Ascending aorta (tissue), 2 donors: ENCODE measurements at regions of chr11 and their contacts with region 1.

Region 1: GRCh38 chr11:130448416-130449309 is at the start of gene ADAMTS15:
- DNase-seq: peak; percentile 39 to 88
- H3K4me3 ChIP-seq: peak within 1 kb of the TSS; percentile 57 to 81
- H3K27ac ChIP-seq: peak within 1 kb of the TSS; percentile 76 to 82
- H3K4me1 ChIP-seq: peaks cover 11 to 24% of the 10 kb centered on the region in 2 donors
- H3K27me3 ChIP-seq: no peaks in the 10 kb centered on the region
- CTCF ChIP-seq: no peak
- total RNA-seq, gene ADAMTS15: 20.4 TPM

Region 2: DNA sequence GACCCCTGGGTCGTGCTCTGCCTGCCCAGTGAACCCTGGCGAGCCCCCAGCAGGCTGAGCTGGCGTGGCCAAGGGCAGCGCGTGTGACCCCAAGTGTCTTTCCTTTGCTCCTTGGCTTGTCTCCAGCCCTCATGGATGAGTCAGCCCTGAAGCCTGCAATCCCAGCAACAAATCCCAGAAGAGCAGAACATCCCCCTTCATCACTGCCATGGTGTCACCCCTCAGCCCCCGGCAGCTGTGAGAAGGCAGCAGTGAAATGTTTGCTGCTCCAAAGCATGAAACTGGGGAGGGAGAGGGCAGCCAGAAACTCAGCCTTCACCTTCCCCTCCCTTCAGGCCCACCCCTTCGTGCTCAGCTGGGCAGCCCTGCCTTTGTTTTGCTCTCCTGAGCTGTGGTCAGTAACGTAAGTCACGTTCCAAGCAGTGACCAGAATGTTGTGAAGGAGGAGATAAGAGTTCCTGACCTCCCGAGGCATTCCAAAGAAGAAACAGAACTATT is 29.6 kb after region 1 on chr11:
- intact Hi-C with region 1: loop called (anchors 1 kb)
- DNase-seq: peak in 1 of 2 donors; percentile 89
- H3K4me3 ChIP-seq: no peak overlapping the region
- H3K27ac ChIP-seq: peak overlapping the region; percentile 75 to 86
- H3K4me1 ChIP-seq: peaks cover 11 to 31% of the 10 kb centered on the region in 2 donors
- H3K27me3 ChIP-seq: no peaks in the 10 kb centered on the region
- CTCF ChIP-seq: no peak

Region 3: GRCh38 chr11:130522284-130522961 is 73.8 kb after region 1 on chr11:
- intact Hi-C with region 1: loop called (anchors 2 kb)
- DNase-seq: peak; percentile 81 to 97
- H3K4me3 ChIP-seq: no peak overlapping the region
- H3K27ac ChIP-seq: peak overlapping the region; percentile 76 to 85
- H3K4me1 ChIP-seq: peaks cover 0 to 23% of the 10 kb centered on the region in 2 donors
- H3K27me3 ChIP-seq: no peaks in the 10 kb centered on the region
- CTCF ChIP-seq: no peak

Region 4: DNA sequence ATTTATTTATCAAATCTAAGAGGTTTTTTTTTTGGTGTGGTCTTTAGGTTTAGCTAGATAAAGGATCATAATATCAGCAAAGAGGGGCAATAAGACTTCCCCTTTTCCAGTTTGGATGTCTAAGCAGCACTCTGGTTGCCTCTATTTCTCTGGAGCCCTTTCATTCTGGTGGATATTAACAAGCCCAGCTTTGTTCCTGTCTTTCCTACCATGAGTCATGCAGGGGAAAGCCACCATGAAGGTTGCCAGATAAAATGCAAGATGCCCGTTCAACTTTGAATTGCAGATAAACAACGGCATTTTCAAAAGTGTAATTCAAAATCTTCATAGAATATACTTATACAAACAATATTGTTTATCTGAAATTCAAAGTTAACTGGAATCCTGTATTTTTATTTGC is 143.4 kb after region 1 on chr11:
- intact Hi-C with region 1: no loop called
- DNase-seq: no peak
- H3K4me3 ChIP-seq: no peak overlapping the region
- H3K27ac ChIP-seq: no peak overlapping the region
- H3K4me1 ChIP-seq: no peaks in the 10 kb centered on the region
- H3K27me3 ChIP-seq: no peaks in the 10 kb centered on the region
- CTCF ChIP-seq: no peak

Region 5: GRCh38 chr11:130827451-130828377 is 379.1 kb after region 1 on chr11:
- intact Hi-C with region 1: loop called (anchors 1 kb)
- DNase-seq: peak in 1 of 2 donors; percentile 86
- H3K4me3 ChIP-seq: no peak overlapping the region
- H3K27ac ChIP-seq: peak overlapping the region; percentile 60 to 63
- H3K4me1 ChIP-seq: peaks cover 10 to 30% of the 10 kb centered on the region in 2 donors
- H3K27me3 ChIP-seq: no peaks in the 10 kb centered on the region
- CTCF ChIP-seq: peak; percentile 39 to 59 (median 56)